Adrenal gland (tissue), 19 donors: ENCODE measurements at regions of chr7 and their contacts with region 1.

Region 1: GRCh38 chr7:15747301-15747700 is 60.8 kb upstream of the MEOX2 start:
- DNase-seq: peak; percentile 51 to 85 (median 63)
- H3K4me3 ChIP-seq: no peak overlapping the region
- H3K27ac ChIP-seq: peak overlapping the region in 2 of 5 donors; percentile 19 to 48
- H3K4me1 ChIP-seq: peaks cover 3 to 18% of the 10 kb centered on the region in 2 donors
- H3K27me3 ChIP-seq: no peaks in the 10 kb centered on the region
- CTCF ChIP-seq: no peak
- POLR2A ChIP-seq: no peak

Region 2: GRCh38 chr7:15839416-15840100 is 92.3 kb after region 1 on chr7:
- intact Hi-C with region 1: loop called in 1 of 2 experiments (anchors 10 kb)
- DNase-seq: peak in 4 of 7 donors; percentile 21 to 60 (median 30)
- H3K4me3 ChIP-seq: peak overlapping the region in 1 of 4 donors; percentile 44
- H3K27ac ChIP-seq: peak overlapping the region in 2 of 5 donors; percentile 24 to 59
- H3K4me1 ChIP-seq: no peaks in the 10 kb centered on the region
- H3K27me3 ChIP-seq: no peaks in the 10 kb centered on the region
- CTCF ChIP-seq: no peak
- POLR2A ChIP-seq: no peak

Region 3: GRCh38 chr7:16091701-16092310 is 344.5 kb after region 1 on chr7:
- intact Hi-C with region 1: no loop called
- DNase-seq: no peak
- H3K4me3 ChIP-seq: no peak overlapping the region
- H3K27ac ChIP-seq: no peak overlapping the region
- H3K4me1 ChIP-seq: no peaks in the 10 kb centered on the region
- H3K27me3 ChIP-seq: no peaks in the 10 kb centered on the region
- CTCF ChIP-seq: no peak
- POLR2A ChIP-seq: no peak